GM12878 (cell line): ENCODE measurements at regions of chr2 and their contacts with region 1.

Region 1: DNA sequence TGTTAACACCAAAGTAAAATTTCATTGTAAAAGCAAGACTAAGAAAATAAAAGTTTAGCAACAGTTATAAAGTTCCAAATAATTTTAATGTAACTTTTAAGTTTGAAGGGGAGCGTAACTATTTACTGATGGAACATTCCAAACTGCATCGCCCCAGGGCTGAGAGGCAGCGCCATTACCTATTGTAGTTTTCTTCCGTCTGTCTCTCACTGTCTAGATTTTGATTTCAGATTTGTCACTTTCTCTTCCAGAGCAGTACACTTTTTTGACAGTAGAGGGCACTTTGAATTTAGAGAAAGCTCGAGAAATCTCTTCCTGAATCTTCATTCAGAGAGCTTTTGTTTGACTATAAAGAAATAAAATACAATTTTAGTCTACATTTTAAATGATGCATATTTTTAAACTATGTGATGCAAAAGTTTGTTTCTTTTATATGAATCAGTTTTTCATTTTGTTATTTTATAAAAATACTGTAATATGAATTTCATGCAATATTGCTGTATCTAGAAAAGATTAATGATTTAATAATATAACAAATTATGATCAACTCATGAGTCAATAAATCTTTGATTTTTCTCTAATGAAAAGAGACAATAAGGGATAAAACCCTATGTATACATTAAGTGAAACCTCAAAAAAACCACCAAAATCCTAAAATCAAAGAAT is 389.8 kb downstream of the FIGN start:
- DNase-seq: peak; percentile 25
- ATAC-seq: peak; percentile 77
- H3K4me3 ChIP-seq: no peak overlapping the region
- H3K27ac ChIP-seq: no peak overlapping the region
- H3K4me1 ChIP-seq: no peaks in the 10 kb centered on the region
- H3K27me3 ChIP-seq: no peaks in the 10 kb centered on the region; a peak in 2 of 4 replicates
- CTCF ChIP-seq: peak; percentile 61 to 73 (median 70); a peak in 5 of 6 replicates
- EP300 ChIP-seq: no peak
- POLR2A ChIP-seq: no peak
- RAD21 ChIP-seq: peak; percentile 70

Region 2: DNA sequence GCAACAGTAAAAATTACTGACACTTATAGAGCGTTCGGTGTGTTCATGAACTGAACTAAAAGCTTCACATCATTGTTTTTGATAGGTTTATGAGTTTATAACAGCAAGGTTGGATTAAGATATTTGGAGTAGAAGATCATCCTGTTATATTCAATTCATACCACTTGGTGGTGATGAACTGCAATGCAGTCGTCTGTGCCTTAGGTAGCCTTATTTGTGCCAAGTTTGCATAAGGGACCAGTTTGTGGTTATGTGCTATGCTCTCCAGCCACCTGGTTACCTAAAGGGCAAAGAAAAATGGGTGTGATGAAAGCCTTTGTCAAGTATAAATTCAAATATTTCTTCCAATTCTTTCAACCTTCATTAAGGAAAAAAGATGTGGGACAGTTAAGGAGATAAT is 356.5 kb before region 1 on chr2:
- CTCF ChIA-PET with region 1: no interaction called
- POLR2A ChIA-PET with region 1: no interaction called
- RAD21 ChIA-PET with region 1: no interaction called
- SMC1A ChIA-PET with region 1: no interaction called
- in situ Hi-C with region 1: no loop called
- intact Hi-C with region 1: no loop called
- DNase-seq: no peak
- ATAC-seq: no peak
- H3K4me3 ChIP-seq: no peak overlapping the region
- H3K27ac ChIP-seq: no peak overlapping the region
- H3K4me1 ChIP-seq: no peaks in the 10 kb centered on the region
- H3K27me3 ChIP-seq: no peaks in the 10 kb centered on the region
- CTCF ChIP-seq: no peak
- EP300 ChIP-seq: no peak
- POLR2A ChIP-seq: no peak
- RAD21 ChIP-seq: no peak

Region 3: GRCh38 chr2:163610817-163611556 is 264.9 kb after region 1 on chr2:
- CTCF ChIA-PET with region 1: interaction called, 8 read pairs
- POLR2A ChIA-PET with region 1: no interaction called
- RAD21 ChIA-PET with region 1: interaction called, 4 read pairs
- SMC1A ChIA-PET with region 1: interaction called, 4 read pairs
- in situ Hi-C with region 1: no loop called
- intact Hi-C with region 1: loop called (anchors 1 kb)
- DNase-seq: no peak
- ATAC-seq: peak; percentile 85
- H3K4me3 ChIP-seq: no peak overlapping the region
- H3K27ac ChIP-seq: no peak overlapping the region
- H3K4me1 ChIP-seq: no peaks in the 10 kb centered on the region
- H3K27me3 ChIP-seq: no peaks in the 10 kb centered on the region
- CTCF ChIP-seq: peak; percentile 23 to 41 (median 40); a peak in 4 of 6 replicates
- EP300 ChIP-seq: no peak
- POLR2A ChIP-seq: no peak
- RAD21 ChIP-seq: peak; percentile 20; the same call in 1 of the 2 replicates

Region 4: GRCh38 chr2:163878531-163879117 is 532.6 kb after region 1 on chr2:
- CTCF ChIA-PET with region 1: interaction called, 4 read pairs
- POLR2A ChIA-PET with region 1: no interaction called
- RAD21 ChIA-PET with region 1: interaction called, 3 read pairs
- SMC1A ChIA-PET with region 1: interaction called, 6 read pairs
- in situ Hi-C with region 1: no loop called
- intact Hi-C with region 1: loop called (anchors 5 kb)
- DNase-seq: no peak
- ATAC-seq: peak; percentile 86
- H3K4me3 ChIP-seq: no peak overlapping the region
- H3K27ac ChIP-seq: no peak overlapping the region
- H3K4me1 ChIP-seq: no peaks in the 10 kb centered on the region
- H3K27me3 ChIP-seq: no peaks in the 10 kb centered on the region
- CTCF ChIP-seq: peak; percentile 50 to 65 (median 61); a peak in 5 of 6 replicates
- EP300 ChIP-seq: no peak
- POLR2A ChIP-seq: no peak
- RAD21 ChIP-seq: peak; percentile 49; the same call in 1 of the 2 replicates

Region 5: DNA sequence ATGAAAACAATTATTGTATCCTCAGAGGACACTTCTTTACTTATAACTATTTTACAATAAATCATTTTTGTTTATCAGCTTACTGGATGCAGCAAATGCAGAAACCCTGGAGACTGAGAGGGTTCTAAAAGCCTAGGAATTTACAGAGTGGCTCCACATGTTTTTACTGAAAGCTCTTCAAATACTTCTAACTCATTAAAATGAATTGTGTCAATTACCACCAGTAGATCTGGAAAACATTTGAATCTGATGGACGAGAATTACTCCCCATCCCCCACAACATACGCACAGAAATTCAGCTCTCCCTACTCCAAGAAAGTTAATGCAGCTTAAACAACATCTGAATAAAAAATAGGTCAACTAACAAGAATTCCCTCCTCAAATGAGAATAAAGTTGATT is 709.6 kb after region 1 on chr2:
- CTCF ChIA-PET with region 1: interaction called, 32 read pairs
- POLR2A ChIA-PET with region 1: no interaction called
- RAD21 ChIA-PET with region 1: interaction called, 13 read pairs
- SMC1A ChIA-PET with region 1: interaction called, 21 read pairs
- in situ Hi-C with region 1: loop called (anchors 10 kb)
- intact Hi-C with region 1: no loop called
- DNase-seq: no peak
- ATAC-seq: no peak
- H3K4me3 ChIP-seq: no peak overlapping the region
- H3K27ac ChIP-seq: no peak overlapping the region
- H3K4me1 ChIP-seq: no peaks in the 10 kb centered on the region
- H3K27me3 ChIP-seq: no peaks in the 10 kb centered on the region
- CTCF ChIP-seq: no peak
- EP300 ChIP-seq: no peak
- POLR2A ChIP-seq: no peak
- RAD21 ChIP-seq: no peak